H1 (cell line): ENCODE measurements at regions of chr19 and their contacts with region 1.

Region 1: GRCh38 chr19:47112997-47113849 is at the start of gene ZC3H4:
- DNase-seq: peak; percentile 99
- H3K4me3 ChIP-seq: peak within 1 kb of the TSS; percentile 83 to 94 (median 89)
- H3K27ac ChIP-seq: peak within 1 kb of the TSS; percentile 99
- H3K4me1 ChIP-seq: peaks cover 4 to 13% (median 11%) of the 10 kb centered on the region in 4 experiments; a peak in 5 of 7 replicates
- H3K27me3 ChIP-seq: no peaks in the 10 kb centered on the region
- CTCF ChIP-seq: no peak
- EP300 ChIP-seq: no peak
- POLR2A ChIP-seq: peak; percentile 69 to 74
- RAD21 ChIP-seq: no peak
- total RNA-seq, gene ZC3H4: 92.0 and 104 TPM in 2 replicates

Region 2: GRCh38 chr19:46426506-46427162 is 686.6 kb before region 1 on chr19:
- CTCF ChIA-PET with region 1: no interaction called
- POLR2A ChIA-PET with region 1: no interaction called
- DNase-seq: peak in 1 of 2 experiments; percentile 91
- H3K4me3 ChIP-seq: peak overlapping the region; percentile 69 to 84 (median 78)
- H3K27ac ChIP-seq: no peak overlapping the region
- H3K4me1 ChIP-seq: peaks cover 3 to 6% (median 5%) of the 10 kb centered on the region in 4 experiments; a peak in 6 of 7 replicates
- H3K27me3 ChIP-seq: peaks cover 0 to 20% (median 15%) of the 10 kb centered on the region in 4 experiments; a peak in 5 of 7 replicates
- CTCF ChIP-seq: no peak
- EP300 ChIP-seq: no peak
- POLR2A ChIP-seq: no peak
- RAD21 ChIP-seq: no peak

Region 3: DNA sequence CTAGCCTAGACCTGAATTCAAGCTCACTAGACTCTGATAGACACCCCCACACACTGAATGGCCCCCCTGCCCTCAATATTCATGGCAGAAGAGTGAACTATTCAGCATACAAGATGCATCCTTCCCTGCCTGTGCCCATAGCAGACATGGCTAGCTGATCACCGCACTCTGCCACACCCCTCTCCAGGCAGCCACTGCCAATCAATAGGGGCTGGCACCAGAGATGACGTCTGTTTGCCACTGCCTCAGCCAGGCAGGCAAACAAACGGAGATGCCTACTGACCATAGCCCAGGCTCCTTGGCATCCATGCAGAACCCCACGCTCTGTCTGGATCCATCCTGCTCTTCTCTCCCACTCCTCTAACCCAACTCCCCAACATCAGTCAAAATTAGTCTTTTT is 107.3 kb before region 1 on chr19:
- CTCF ChIA-PET with region 1: no interaction called
- POLR2A ChIA-PET with region 1: no interaction called
- DNase-seq: no peak
- H3K4me3 ChIP-seq: no peak overlapping the region
- H3K27ac ChIP-seq: no peak overlapping the region
- H3K4me1 ChIP-seq: peaks cover 0 to 5% (median 0%) of the 10 kb centered on the region in 4 experiments; a peak in 2 of 7 replicates
- H3K27me3 ChIP-seq: no peaks in the 10 kb centered on the region
- CTCF ChIP-seq: no peak
- EP300 ChIP-seq: no peak
- POLR2A ChIP-seq: no peak
- RAD21 ChIP-seq: no peak

Region 4: DNA sequence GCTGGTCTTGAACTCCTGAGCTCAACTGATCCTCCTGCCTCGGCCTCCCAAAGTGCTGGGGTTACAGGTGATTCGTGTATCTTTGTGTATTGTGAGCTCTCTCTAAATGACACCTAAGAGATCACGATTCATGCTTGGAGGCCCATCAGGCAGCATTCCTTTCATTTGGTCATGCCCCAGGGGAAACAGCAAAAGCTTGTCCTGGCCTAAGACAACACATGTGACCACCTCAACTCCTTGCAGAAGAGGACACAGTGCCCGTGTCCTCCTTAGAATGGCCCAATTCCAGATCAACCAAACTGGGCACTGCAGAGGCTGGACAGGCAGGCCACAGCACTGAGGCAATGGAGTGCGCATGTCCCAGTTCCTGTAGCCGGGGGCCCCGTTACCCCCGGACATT is 32.1 kb before region 1 on chr19:
- CTCF ChIA-PET with region 1: interaction called, 29 read pairs
- POLR2A ChIA-PET with region 1: interaction called, 27 read pairs
- DNase-seq: no peak
- H3K4me3 ChIP-seq: no peak overlapping the region
- H3K27ac ChIP-seq: no peak overlapping the region
- H3K4me1 ChIP-seq: no peaks in the 10 kb centered on the region
- H3K27me3 ChIP-seq: no peaks in the 10 kb centered on the region
- CTCF ChIP-seq: no peak
- EP300 ChIP-seq: no peak
- POLR2A ChIP-seq: no peak
- RAD21 ChIP-seq: no peak

Region 5: GRCh38 chr19:47102346-47103060 is 10.7 kb before region 1 on chr19:
- CTCF ChIA-PET with region 1: interaction called, 3 read pairs
- POLR2A ChIA-PET with region 1: interaction called, 209 read pairs
- DNase-seq: no peak
- H3K4me3 ChIP-seq: no peak overlapping the region
- H3K27ac ChIP-seq: no peak overlapping the region
- H3K4me1 ChIP-seq: peaks cover 0 to 9% (median 1%) of the 10 kb centered on the region in 4 experiments; a peak in 2 of 7 replicates
- H3K27me3 ChIP-seq: no peaks in the 10 kb centered on the region
- CTCF ChIP-seq: no peak
- EP300 ChIP-seq: no peak
- POLR2A ChIP-seq: no peak
- RAD21 ChIP-seq: no peak

Region 6: GRCh38 chr19:47130591-47131227 is 17.5 kb after region 1 on chr19 and contains the start of gene SAE1:
- CTCF ChIA-PET with region 1: interaction called, 25 read pairs
- POLR2A ChIA-PET with region 1: interaction called, 44 read pairs
- DNase-seq: peak; percentile 98 to 99
- H3K4me3 ChIP-seq: peak within 1 kb of the TSS; percentile 90 to 99 (median 94)
- H3K27ac ChIP-seq: peak within 1 kb of the TSS; percentile 94
- H3K4me1 ChIP-seq: peaks cover 0 to 8% (median 7%) of the 10 kb centered on the region in 4 experiments; a peak in 5 of 7 replicates
- H3K27me3 ChIP-seq: no peaks in the 10 kb centered on the region
- CTCF ChIP-seq: peak; percentile 34 to 63 (median 52); a peak in 3 of 4 replicates
- EP300 ChIP-seq: no peak
- POLR2A ChIP-seq: peak; percentile 78 to 84
- RAD21 ChIP-seq: peak; percentile 38 to 41; a peak in 2 of 4 replicates
- total RNA-seq, gene SAE1: 268 and 273 TPM in 2 replicates

Region 7: DNA sequence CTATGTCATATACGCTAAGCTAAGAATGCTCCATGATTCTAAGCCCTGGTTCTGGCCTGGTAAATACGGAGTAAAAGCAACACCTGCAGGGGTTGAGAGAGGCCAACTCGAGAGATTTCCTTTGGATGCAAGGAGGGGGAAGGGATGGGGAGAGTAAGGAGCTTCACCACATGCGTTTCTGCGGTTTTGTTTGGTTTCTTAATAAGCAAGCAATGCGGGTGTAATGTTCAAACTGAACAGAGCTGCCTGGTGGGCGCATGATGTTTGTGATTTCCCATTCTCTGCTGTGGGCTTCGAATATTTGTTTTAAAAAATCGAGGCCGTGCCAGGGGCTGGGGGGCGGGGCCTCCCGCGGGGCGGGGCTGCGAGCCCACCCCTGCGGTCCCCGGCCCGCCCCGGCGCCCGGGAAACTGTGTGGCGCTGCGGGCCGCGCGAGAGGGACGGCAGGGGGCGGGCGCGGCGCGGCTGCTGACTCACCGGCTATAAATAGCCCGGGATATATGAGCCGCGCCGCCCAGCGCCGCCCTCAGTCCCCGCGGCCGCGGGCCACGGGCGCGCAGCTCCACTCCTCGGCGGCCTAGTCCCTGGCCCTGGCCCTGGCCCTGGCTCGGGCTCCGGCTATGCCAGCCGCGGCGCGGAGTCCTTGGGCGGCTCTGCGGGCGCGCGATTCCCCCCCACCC is 112.7 kb after region 1 on chr19:
- CTCF ChIA-PET with region 1: no interaction called
- POLR2A ChIA-PET with region 1: interaction called, 12 read pairs
- DNase-seq: peak in 1 of 2 experiments; percentile 91
- H3K4me3 ChIP-seq: peak overlapping the region; percentile 36 to 99 (median 72); a peak in 7 of 8 replicates
- H3K27ac ChIP-seq: peak overlapping the region; percentile 82; the same call in 1 of the 2 replicates
- H3K4me1 ChIP-seq: peaks cover 5 to 32% (median 17%) of the 10 kb centered on the region in 4 experiments
- H3K27me3 ChIP-seq: no peaks in the 10 kb centered on the region; a peak in 1 of 7 replicates
- CTCF ChIP-seq: peak in 1 of 3 experiments; percentile 39; a peak in 2 of 4 replicates
- EP300 ChIP-seq: peak in 1 of 2 experiments; percentile 71; a peak in 2 of 3 replicates
- POLR2A ChIP-seq: peak; percentile 98 to 100
- RAD21 ChIP-seq: no peak

Region 8: GRCh38 chr19:47330466-47330869 is 217.2 kb after region 1 on chr19:
- CTCF ChIA-PET with region 1: no interaction called
- POLR2A ChIA-PET with region 1: no interaction called
- DNase-seq: no peak
- H3K4me3 ChIP-seq: no peak overlapping the region
- H3K27ac ChIP-seq: no peak overlapping the region
- H3K4me1 ChIP-seq: no peaks in the 10 kb centered on the region
- H3K27me3 ChIP-seq: no peaks in the 10 kb centered on the region
- CTCF ChIP-seq: no peak
- EP300 ChIP-seq: no peak
- POLR2A ChIP-seq: no peak
- RAD21 ChIP-seq: no peak